ENCODE measurements at regions of chr5 and their contacts with region 1.

Region 1: GRCh38 chr5:135191084-135191826 is 157.2 kb upstream of the PITX1 start:
- DNase-seq: peak; percentile 90 to 93
- H3K4me3 ChIP-seq: peak overlapping the region; percentile 72
- H3K4me3 Mint-ChIP-seq: peak overlapping the region; percentile 81
- H3K27ac Mint-ChIP-seq: peak overlapping the region; percentile 76
- H3K4me1 ChIP-seq: peaks cover 35% of the 10 kb centered on the region
- H3K4me1 Mint-ChIP-seq: peaks cover 16% of the 10 kb centered on the region
- H3K27me3 ChIP-seq: no peaks in the 10 kb centered on the region
- H3K27me3 Mint-ChIP-seq: no peaks in the 10 kb centered on the region
- CTCF ChIP-seq: peak; percentile 94 to 98

Region 2: DNA sequence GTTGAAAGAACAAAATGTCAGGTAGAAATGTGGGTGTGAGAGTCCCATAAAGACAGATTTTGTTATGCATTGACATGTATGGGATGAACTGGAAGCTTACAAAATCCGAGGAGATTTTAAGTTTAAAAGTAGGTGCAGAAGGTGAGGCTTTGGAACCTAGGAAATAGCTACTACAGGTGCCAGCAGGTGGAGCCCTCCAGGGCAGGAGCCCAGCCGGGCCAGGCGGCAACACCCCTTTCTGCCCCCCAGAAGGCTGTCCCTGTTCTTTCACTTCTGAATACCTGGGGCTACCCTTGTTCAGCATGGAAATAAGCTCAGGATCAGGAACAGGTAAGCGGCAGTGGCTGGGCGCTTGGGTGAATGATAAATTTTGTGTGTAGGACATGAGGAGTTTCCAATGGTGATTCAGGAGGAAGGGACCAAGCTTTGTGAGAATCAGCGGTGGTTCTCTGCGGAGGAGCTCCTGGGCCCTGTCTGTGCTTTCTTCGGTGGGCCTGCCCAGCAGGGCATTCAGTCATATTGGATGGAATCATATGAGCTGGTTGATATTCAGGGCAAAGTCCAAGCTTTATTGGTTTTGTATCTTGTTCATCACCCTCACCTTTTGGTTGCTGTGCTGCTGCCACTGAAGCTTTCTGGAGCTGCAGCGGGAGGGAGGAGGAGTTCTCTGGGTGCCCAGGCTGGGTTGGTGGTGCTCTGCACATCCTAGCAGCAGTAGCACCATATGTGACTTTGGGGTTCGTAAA is 274.0 kb before region 1 on chr5:
- CTCF ChIA-PET with region 1: interaction called, 20 read pairs
- POLR2A ChIA-PET with region 1: no interaction called
- intact Hi-C with region 1: loop called (anchors 1 kb)
- DNase-seq: peak in 1 of 2 experiments; percentile 44
- H3K4me3 ChIP-seq: no peak overlapping the region
- H3K4me3 Mint-ChIP-seq: no peak overlapping the region
- H3K27ac Mint-ChIP-seq: no peak overlapping the region
- H3K4me1 ChIP-seq: no peaks in the 10 kb centered on the region
- H3K4me1 Mint-ChIP-seq: peaks cover 11% of the 10 kb centered on the region
- H3K27me3 ChIP-seq: no peaks in the 10 kb centered on the region
- H3K27me3 Mint-ChIP-seq: no peaks in the 10 kb centered on the region
- CTCF ChIP-seq: peak; percentile 38 to 72

Region 3: DNA sequence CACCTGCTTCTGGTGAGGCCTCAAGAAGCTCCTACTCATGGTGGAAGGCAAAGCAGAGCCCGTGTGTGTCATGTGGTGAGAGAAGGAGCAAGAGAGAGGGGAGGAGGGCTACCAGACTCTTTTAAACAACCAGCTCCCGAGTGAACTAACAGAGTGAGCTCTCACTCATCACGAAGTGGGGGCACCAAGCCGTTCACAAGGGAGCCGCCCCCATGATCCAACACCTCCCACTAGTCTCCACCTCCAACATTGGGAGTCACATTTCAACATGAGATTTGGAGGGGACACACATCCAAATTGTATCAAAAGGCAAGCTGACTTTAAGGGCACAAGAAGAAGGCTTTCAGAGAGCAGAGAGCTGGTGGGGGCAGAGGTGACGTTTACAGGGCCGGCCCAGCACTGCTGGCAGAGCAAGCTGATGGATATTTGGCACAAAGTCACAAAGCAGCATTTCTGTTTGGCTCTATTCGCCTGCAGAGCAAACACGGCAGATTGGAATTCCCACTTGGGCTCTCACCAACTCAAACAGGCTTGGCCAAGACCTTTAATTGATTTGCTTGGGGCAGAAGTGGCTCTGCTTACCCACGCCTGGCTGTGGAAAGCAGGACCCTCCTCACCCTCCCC is 177.2 kb before region 1 on chr5:
- CTCF ChIA-PET with region 1: interaction called, 4 read pairs
- POLR2A ChIA-PET with region 1: no interaction called
- intact Hi-C with region 1: loop called (anchors 1 kb)
- DNase-seq: no peak
- H3K4me3 ChIP-seq: no peak overlapping the region
- H3K4me3 Mint-ChIP-seq: no peak overlapping the region
- H3K27ac Mint-ChIP-seq: no peak overlapping the region
- H3K4me1 ChIP-seq: peaks cover 4% of the 10 kb centered on the region; the same call in 1 of the 2 replicates
- H3K4me1 Mint-ChIP-seq: peaks cover 13% of the 10 kb centered on the region
- H3K27me3 ChIP-seq: no peaks in the 10 kb centered on the region
- H3K27me3 Mint-ChIP-seq: no peaks in the 10 kb centered on the region
- CTCF ChIP-seq: no peak

Region 4: DNA sequence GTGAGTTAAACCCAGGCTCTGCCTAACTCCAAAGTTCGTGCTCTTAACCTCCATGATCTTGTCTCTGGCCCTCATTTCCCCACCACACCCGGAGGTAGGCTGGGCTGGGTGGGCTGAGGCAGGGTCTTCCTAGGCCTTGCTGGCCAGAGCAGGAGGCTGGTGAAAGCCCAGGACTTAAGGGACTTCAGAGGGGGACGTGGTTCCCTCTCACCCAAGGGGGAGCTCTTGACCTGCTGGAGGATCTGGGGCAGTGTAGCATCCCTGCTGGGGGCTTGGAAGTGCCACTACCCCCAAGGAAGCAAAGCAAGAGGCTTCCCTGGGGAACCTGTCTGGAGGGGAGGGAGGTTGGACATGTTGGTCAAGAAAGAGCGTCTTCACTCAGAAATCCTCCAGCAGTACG is 171.9 kb before region 1 on chr5:
- CTCF ChIA-PET with region 1: interaction called, 3 read pairs
- POLR2A ChIA-PET with region 1: no interaction called
- intact Hi-C with region 1: loop called (anchors 1 kb)
- DNase-seq: peak in 1 of 2 experiments; percentile 34
- H3K4me3 ChIP-seq: no peak overlapping the region
- H3K4me3 Mint-ChIP-seq: no peak overlapping the region
- H3K27ac Mint-ChIP-seq: no peak overlapping the region
- H3K4me1 ChIP-seq: no peaks in the 10 kb centered on the region
- H3K4me1 Mint-ChIP-seq: no peaks in the 10 kb centered on the region
- H3K27me3 ChIP-seq: no peaks in the 10 kb centered on the region
- H3K27me3 Mint-ChIP-seq: no peaks in the 10 kb centered on the region
- CTCF ChIP-seq: peak in 1 of 2 experiments; percentile 47